Activated naive CD4-positive, alpha-beta T cell treated with anti-CD3 and anti-CD28 coated beads for 36 hours (primary cell): ENCODE measurements at regions of chr12 and their contacts with region 1.

Region 1: DNA sequence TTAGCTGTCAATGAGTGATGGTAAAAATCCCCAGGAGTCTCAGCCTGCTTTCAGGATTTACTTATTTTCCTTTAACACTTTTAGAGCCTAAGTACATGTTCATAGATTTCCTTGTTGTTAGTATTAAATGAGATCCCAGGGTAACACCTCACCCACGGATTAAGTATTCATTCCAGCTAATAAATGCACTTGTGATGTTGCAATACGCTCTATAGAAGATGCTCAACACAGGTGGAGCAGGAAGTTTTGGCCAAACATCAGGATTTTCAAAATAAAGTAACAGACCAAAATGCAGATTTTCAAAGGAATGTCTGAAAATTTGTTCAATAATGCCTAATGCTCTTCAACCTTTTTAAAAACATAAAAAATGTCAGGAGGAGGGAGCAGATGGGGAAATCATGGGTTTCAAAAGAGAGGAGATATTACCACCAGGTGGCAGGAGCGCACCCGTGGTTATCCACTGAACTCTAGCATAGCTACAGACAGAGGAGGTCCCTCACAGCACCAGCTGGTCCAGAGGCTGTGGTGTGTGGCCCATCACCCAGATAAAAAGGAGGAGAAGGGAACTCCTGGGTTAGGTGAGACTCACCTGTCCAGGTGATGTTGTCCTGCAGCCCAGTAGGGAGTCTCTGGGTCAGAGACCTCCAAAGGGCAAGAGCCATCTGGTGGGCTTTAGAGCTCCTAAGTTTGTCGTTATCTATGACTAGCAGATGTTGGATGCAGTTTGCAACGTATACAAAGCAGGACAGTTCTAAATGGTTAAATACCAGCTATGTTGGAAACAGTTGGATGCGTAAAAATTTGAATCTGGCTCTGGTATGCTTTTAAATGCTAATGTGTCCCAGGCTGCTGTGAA is 1158.4 kb upstream of the TMEM132C start:
- DNase-seq: peak; percentile 70
- H3K4me3 Mint-ChIP-seq: no peak overlapping the region
- H3K27ac Mint-ChIP-seq: no peak overlapping the region
- H3K4me1 Mint-ChIP-seq: no peaks in the 10 kb centered on the region
- H3K27me3 Mint-ChIP-seq: peaks cover 22% of the 10 kb centered on the region

Region 2: GRCh38 chr12:127165567-127166392 is 57.2 kb after region 1 on chr12:
- CTCF ChIA-PET with region 1: interaction called, 9 read pairs
- intact Hi-C with region 1: loop called (anchors 1 kb)
- DNase-seq: peak; percentile 86
- H3K4me3 Mint-ChIP-seq: peak overlapping the region; percentile 74
- H3K27ac Mint-ChIP-seq: no peak overlapping the region
- H3K4me1 Mint-ChIP-seq: peaks cover 22% of the 10 kb centered on the region
- H3K27me3 Mint-ChIP-seq: peaks cover 7% of the 10 kb centered on the region

Region 3: GRCh38 chr12:127293507-127294310 is 185.1 kb after region 1 on chr12:
- CTCF ChIA-PET with region 1: interaction called, 5 read pairs
- intact Hi-C with region 1: loop called (anchors 1 kb)
- DNase-seq: peak; percentile 69
- H3K4me3 Mint-ChIP-seq: no peak overlapping the region
- H3K27ac Mint-ChIP-seq: no peak overlapping the region
- H3K4me1 Mint-ChIP-seq: no peaks in the 10 kb centered on the region
- H3K27me3 Mint-ChIP-seq: no peaks in the 10 kb centered on the region

Region 4: GRCh38 chr12:127363392-127363791 is 254.8 kb after region 1 on chr12:
- CTCF ChIA-PET with region 1: interaction called, 3 read pairs
- intact Hi-C with region 1: loop called (anchors 1 kb)
- DNase-seq: no peak
- H3K4me3 Mint-ChIP-seq: no peak overlapping the region
- H3K27ac Mint-ChIP-seq: no peak overlapping the region
- H3K4me1 Mint-ChIP-seq: no peaks in the 10 kb centered on the region
- H3K27me3 Mint-ChIP-seq: no peaks in the 10 kb centered on the region

Region 5: DNA sequence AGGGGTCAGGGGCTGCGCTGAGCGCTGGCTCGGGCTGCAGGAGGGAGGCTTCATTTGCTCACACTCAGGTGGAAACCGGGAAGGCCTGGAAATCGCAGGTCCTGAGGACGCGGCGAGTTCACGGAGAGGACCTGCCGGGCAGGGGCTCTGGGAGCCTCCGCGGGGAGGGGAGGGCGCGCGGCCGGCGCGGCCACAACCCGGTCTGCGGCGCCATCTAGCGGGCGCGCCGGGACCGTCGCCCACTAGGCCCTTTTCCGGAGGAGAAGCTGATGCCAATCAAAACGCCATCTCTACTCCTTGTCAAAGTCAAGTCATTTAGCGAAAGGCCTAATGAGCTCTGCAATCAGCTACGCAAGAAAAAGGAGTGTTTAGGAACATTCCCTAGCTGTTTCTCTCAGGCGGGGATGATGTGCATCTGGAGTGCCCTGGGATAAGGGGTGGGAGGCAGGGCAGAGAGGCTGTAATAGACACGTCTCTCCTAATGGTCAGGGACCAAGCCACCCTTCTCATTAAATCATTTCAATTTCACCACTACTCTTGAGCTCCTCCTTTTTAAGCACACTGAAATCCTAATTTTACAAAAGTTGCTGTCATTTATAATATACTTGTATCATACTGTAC is 272.6 kb after region 1 on chr12:
- CTCF ChIA-PET with region 1: interaction called, 13 read pairs
- intact Hi-C with region 1: loop called (anchors 1 kb)
- DNase-seq: peak; percentile 31
- H3K4me3 Mint-ChIP-seq: no peak overlapping the region
- H3K27ac Mint-ChIP-seq: no peak overlapping the region
- H3K4me1 Mint-ChIP-seq: peaks cover 2% of the 10 kb centered on the region
- H3K27me3 Mint-ChIP-seq: peaks cover 9% of the 10 kb centered on the region

Region 6: DNA sequence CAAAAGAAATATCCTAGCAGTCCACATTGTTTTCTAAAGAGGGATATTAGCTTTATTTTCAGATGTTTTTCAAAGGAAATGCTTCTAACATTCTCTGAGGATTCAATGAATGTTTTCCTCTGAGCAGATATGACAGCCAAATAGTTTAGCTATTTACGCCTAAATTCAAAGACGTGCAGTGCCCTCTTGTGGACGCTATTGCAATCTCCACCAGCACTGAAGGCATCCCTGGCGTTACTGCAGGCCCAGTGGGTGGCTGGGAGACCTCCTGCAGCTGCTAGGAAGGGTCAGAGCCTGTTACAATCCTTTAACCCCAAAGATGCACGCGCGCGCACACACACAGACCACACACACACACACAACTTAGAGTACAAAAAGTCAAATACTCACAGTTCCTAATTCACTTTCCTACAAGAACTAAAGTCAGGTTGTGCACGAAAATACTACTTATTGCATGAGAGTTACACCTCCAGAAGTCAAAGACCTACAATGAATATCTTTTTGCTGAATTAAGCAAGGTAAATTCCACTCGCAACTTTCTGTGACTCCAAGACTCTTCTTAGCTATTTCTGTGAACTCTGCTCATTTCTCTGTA is 569.0 kb after region 1 on chr12:
- CTCF ChIA-PET with region 1: interaction called, 14 read pairs
- intact Hi-C with region 1: loop called (anchors 1 kb)
- DNase-seq: peak; percentile 73
- H3K4me3 Mint-ChIP-seq: no peak overlapping the region
- H3K27ac Mint-ChIP-seq: no peak overlapping the region
- H3K4me1 Mint-ChIP-seq: no peaks in the 10 kb centered on the region
- H3K27me3 Mint-ChIP-seq: no peaks in the 10 kb centered on the region

Region 7: DNA sequence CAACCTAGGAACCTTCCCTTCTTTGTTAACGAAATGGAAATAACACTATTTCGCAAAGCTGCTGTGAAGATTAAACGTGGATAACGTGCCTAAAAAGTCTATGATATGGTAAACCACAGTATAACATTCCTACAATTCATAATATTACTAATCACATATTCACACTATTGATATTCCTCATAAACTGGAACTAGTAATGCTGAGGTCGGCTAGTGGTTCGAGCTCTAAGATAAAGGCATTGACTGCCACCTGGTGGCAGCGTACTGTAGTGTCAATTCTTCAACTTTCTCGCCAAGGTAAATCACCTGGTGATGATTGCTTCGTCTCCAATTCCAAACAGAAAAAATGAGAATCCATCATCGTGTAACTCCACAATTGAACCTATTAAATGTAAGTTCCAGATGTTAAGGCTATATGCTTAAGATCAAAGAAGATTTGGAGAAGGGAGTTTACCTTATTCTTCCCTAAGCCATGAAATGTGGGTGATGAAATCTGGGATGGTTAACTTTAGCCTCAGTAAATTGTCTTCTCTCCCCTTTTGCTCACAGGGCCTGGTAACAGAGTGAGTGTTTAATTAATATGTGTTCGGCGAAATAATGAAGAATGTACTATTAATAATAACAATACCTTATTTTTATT is 960.9 kb after region 1 on chr12:
- CTCF ChIA-PET with region 1: no interaction called
- intact Hi-C with region 1: loop called (anchors 10 kb)
- DNase-seq: peak; percentile 43
- H3K4me3 Mint-ChIP-seq: no peak overlapping the region
- H3K27ac Mint-ChIP-seq: no peak overlapping the region
- H3K4me1 Mint-ChIP-seq: no peaks in the 10 kb centered on the region
- H3K27me3 Mint-ChIP-seq: no peaks in the 10 kb centered on the region